Prostate gland (tissue), 2 donors: ENCODE measurements at regions of chr22 and their contacts with region 1.

Region 1: GRCh38 chr22:29055192-29055830 is 6.3 kb downstream of the C22orf31 start:
- DNase-seq: no peak
- H3K4me3 ChIP-seq: no peak overlapping the region
- H3K27ac ChIP-seq: no peak overlapping the region
- H3K4me1 ChIP-seq: peaks cover 4% of the 10 kb centered on the region
- H3K27me3 ChIP-seq: no peaks in the 10 kb centered on the region
- CTCF ChIP-seq: no peak
- POLR2A ChIP-seq: no peak

Region 2: GRCh38 chr22:29154364-29155048 is 99.2 kb after region 1 on chr22:
- intact Hi-C with region 1: loop called (anchors 5 kb)
- DNase-seq: peak; percentile 51
- H3K4me3 ChIP-seq: no peak overlapping the region
- H3K27ac ChIP-seq: no peak overlapping the region
- H3K4me1 ChIP-seq: peaks cover 4% of the 10 kb centered on the region
- H3K27me3 ChIP-seq: no peaks in the 10 kb centered on the region
- CTCF ChIP-seq: peak; percentile 87 to 94 (median 93)
- POLR2A ChIP-seq: no peak